Prostate gland (tissue), 2 donors: ENCODE measurements at regions of chr6 and their contacts with region 1.

Region 1: GRCh38 chr6:85678602-85679444 is 36.1 kb upstream of the SYNCRIP start:
- DNase-seq: peak; percentile 98
- H3K4me3 ChIP-seq: peak overlapping the region; percentile 82 to 93
- H3K27ac ChIP-seq: peak overlapping the region; percentile 86 to 87
- H3K4me1 ChIP-seq: no peaks in the 10 kb centered on the region
- H3K27me3 ChIP-seq: no peaks in the 10 kb centered on the region
- CTCF ChIP-seq: peak in 2 of 4 experiments; percentile 4 to 22
- POLR2A ChIP-seq: peak; percentile 99

Region 2: GRCh38 chr6:85078071-85078470 is 600.8 kb before region 1 on chr6:
- intact Hi-C with region 1: no loop called
- DNase-seq: no peak
- H3K4me3 ChIP-seq: no peak overlapping the region
- H3K27ac ChIP-seq: no peak overlapping the region
- H3K4me1 ChIP-seq: no peaks in the 10 kb centered on the region
- H3K27me3 ChIP-seq: no peaks in the 10 kb centered on the region
- CTCF ChIP-seq: no peak
- POLR2A ChIP-seq: no peak

Region 3: GRCh38 chr6:85449818-85450759 is 228.7 kb before region 1 on chr6 and contains the start of gene NT5E:
- intact Hi-C with region 1: loop called (anchors 10 kb)
- DNase-seq: peak; percentile 17
- H3K4me3 ChIP-seq: peak within 1 kb of the TSS; percentile 45 to 49
- H3K27ac ChIP-seq: peak within 1 kb of the TSS; percentile 63
- H3K4me1 ChIP-seq: no peaks in the 10 kb centered on the region
- H3K27me3 ChIP-seq: no peaks in the 10 kb centered on the region
- CTCF ChIP-seq: no peak
- POLR2A ChIP-seq: peak; percentile 28
- total RNA-seq, gene NT5E: 8.2 to 31.2 TPM

Region 4: GRCh38 chr6:85593438-85594196 is 85.2 kb before region 1 on chr6 and contains the start of gene SNX14:
- intact Hi-C with region 1: loop called (anchors 2 kb)
- DNase-seq: peak; percentile 92
- H3K4me3 ChIP-seq: peak within 1 kb of the TSS; percentile 51 to 54
- H3K27ac ChIP-seq: peak within 1 kb of the TSS; percentile 88 to 91
- H3K4me1 ChIP-seq: no peaks in the 10 kb centered on the region
- H3K27me3 ChIP-seq: no peaks in the 10 kb centered on the region
- CTCF ChIP-seq: peak in 3 of 4 experiments; percentile 22 to 35 (median 26)
- POLR2A ChIP-seq: peak; percentile 71
- total RNA-seq, gene SNX14: 40.7 to 67.2 TPM

Region 5: GRCh38 chr6:85642774-85643536 is 35.9 kb before region 1 on chr6 and contains the start of gene SYNCRIP:
- intact Hi-C with region 1: loop called (anchors 1 kb)
- DNase-seq: peak; percentile 99
- H3K4me3 ChIP-seq: peak within 1 kb of the TSS; percentile 79 to 99
- H3K27ac ChIP-seq: peak within 1 kb of the TSS; percentile 95 to 100
- H3K4me1 ChIP-seq: peaks cover 6% of the 10 kb centered on the region
- H3K27me3 ChIP-seq: no peaks in the 10 kb centered on the region
- CTCF ChIP-seq: no peak
- POLR2A ChIP-seq: peak; percentile 92
- total RNA-seq, gene SYNCRIP: 46.1 to 49.7 TPM

Region 6: DNA sequence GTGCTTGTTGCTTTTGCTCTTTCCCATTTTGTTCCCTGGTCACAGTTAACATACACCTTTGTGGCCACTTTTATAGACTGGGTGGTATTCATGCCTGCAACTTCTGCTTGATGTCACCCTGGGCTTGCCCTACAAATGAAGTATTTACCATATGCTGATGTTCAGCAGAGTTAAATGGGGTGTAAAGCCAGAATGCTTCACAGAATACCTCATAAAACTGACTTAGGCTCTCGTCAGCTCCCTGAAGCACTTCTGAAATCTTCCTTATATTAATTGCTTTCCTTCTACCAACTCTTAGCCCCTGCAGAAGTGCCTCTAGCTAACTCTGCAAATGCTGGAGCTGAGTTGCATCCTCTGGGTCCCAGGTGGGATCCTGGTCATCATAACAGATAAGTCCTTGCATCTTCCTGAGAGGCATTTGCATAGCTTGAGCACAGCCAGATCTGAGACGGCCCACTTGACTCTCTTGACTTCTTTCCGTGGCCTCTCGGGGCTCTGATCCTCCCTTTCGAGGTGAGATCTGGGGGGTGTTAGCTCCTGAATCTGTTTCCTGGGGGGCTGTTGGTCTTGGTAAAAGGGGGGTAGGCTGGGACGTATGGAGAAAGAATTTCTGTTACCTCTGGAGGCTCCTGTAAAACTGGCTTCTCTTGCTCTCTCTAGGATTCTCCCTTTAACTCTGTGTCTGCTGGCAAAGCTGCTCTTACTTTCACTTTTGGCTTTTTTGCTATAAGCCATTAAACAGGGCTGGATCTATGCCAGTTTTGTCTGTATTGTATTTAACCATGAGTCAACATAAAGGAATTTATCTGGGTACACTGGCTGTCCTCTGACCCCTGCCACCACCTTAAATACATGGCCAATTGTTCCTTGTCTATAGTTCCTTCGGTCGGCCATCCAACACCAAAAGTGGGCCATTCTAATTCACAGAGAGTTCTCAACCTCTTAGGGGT is 186.9 kb after region 1 on chr6:
- intact Hi-C with region 1: loop called (anchors 10 kb)
- DNase-seq: peak; percentile 28
- H3K4me3 ChIP-seq: peak overlapping the region; percentile 14 to 30
- H3K27ac ChIP-seq: peak overlapping the region; percentile 61 to 66
- H3K4me1 ChIP-seq: peaks cover 16% of the 10 kb centered on the region
- H3K27me3 ChIP-seq: no peaks in the 10 kb centered on the region
- CTCF ChIP-seq: no peak
- POLR2A ChIP-seq: no peak

Region 7: DNA sequence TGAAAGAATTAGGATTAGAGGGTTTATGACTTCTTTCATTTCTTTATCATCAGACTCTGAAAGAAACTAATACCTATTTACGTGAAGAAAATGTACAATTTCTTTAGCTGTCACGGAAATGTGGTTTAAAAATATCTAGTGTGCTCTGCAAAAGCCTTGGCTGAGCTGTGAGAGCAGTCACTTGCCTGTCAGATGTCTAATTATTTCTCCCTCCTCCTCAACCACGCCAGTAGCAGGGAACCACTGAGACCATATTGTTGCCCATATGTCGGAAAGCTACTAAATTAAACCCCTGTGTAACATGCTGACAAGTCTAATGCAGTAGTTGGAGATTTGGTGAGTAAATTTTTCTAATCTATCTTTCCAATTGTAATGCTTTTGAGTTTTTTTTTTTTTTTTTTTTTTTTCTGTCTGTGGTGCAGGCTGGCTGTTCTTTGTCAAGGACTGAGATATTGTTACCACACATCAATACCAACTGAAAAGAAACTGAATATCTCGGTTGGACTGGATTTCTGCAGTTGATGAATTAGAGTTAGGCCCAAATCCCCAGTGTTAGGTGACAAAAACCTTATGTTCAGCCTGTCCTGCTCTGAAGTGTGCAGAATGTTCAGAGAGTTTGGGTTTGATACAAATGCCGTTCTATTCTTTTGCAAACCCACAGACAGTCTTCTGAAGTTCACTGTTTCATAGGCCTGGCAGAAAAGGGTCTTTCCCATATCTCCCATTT is 266.8 kb after region 1 on chr6:
- intact Hi-C with region 1: no loop called
- DNase-seq: no peak
- H3K4me3 ChIP-seq: no peak overlapping the region
- H3K27ac ChIP-seq: no peak overlapping the region
- H3K4me1 ChIP-seq: no peaks in the 10 kb centered on the region
- H3K27me3 ChIP-seq: no peaks in the 10 kb centered on the region
- CTCF ChIP-seq: no peak
- POLR2A ChIP-seq: no peak

Region 8: DNA sequence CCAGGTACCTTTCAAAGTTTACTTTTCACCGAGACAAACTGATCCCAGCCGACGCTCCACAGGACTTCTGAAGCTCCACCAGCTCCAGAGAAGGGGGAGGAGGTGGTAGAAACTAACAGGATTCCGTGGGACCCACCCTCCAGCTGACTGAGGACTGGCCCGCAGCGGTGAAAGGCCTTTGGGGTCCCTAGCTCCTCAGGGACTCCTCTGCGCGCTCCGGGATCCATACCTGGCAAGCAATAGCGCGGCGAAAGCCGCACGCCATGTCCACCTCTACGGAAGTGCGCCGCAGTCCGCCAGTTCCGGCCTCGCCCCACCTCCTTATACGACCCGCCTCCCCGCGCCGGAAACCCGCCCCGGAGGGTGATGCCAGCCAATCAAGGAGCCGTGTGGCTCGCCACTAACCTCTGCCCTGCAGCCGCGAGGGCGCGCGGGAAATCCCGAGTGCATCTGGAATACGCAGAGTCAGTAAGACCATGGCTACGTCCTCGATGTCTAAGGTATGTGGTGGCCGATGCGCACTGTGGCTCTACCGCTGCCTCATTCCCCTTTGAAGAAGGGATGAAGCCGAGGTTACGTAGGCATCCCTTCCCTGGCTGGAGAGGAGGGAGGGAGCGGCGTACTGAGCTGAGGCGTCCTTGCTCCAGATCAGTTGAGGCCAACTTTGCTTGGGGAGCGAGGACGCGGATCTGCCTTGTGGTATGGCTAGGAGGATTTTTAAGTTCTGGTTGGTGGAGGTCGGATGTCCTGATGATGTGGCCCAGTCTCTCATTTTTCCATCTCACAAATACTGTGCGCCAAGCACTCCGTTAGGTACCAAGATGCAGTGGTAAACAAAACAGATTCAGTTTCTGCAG is 1911.1 kb after region 1 on chr6 and contains the starts of genes ORC3 and RARS2:
- intact Hi-C with region 1: loop called (anchors 10 kb)
- DNase-seq: peak; percentile 96
- H3K4me3 ChIP-seq: peak within 1 kb of the TSS; percentile 77 to 89
- H3K27ac ChIP-seq: peak within 1 kb of the TSS; percentile 71 to 88
- H3K4me1 ChIP-seq: peaks cover 17% of the 10 kb centered on the region
- H3K27me3 ChIP-seq: no peaks in the 10 kb centered on the region
- CTCF ChIP-seq: no peak
- POLR2A ChIP-seq: peak; percentile 78
- total RNA-seq, gene ORC3: 18.5 to 30.9 TPM
- total RNA-seq, gene RARS2: 27.4 to 29.5 TPM